BJ (cell line): ENCODE measurements at regions of chr2 and their contacts with region 1.

Region 1: DNA sequence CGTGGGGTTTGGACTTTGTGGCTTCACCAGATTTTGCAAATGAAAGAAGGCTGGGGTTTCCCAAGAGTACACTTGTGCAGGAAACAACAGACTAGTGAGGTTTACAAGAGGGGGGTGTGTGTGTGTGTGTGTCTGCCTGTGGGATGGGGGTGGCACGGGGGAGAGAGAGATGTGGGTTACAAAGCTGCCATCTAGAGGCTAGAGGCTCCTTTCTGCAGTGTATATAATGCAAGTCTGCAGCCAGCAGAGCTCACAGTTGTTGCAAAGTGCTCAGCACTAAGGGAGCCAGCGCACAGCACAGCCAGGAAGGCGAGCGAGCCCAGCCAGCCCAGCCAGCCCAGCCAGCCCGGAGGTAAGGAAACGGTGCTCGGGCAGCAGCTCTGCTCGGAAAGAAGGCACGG is at the start of gene ACKR3:
- DNase-seq: peak; percentile 68
- H3K4me3 ChIP-seq: peak within 1 kb of the TSS; percentile 37
- H3K27me3 ChIP-seq: peaks cover 22% of the 10 kb centered on the region
- CTCF ChIP-seq: peak; percentile 56
- polyA plus RNA-seq, gene ACKR3: 4.6 and 6.6 TPM in 2 replicates

Region 2: DNA sequence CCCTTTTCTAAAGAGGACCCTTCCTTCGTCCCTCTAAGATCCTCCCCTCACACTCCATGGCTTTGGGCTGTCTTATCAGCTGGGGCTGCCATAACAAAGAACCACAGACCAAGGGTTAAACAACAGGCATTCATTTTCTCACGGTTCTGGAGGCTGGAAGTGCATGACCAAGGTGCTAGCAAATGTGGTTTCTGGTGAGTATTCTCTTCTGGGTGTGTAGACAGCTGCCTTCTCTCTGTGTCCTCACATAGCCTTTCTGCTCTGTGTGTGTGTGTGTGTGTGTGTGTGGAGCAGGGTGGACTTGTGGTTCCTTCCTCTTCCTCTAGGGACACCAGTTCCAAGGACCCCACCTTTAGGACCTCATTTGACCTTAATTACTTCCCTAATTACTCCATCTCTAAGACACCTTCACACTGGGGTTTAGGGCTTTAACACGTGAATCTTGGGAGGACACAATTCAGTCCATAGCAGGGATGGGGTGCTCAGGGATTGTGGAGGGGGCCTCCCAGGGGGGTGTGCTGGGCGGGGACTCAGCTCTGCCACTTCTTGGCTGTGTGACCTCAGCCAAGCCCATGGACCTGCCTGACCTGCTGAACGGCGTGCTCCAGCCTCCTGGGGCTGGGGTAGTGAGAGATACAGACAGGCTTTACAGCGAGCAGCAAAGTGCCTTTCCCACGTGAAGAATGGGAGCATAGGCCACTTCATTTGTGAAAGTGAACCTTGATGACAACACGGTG is 38.0 kb after region 1 on chr2:
- CTCF ChIA-PET with region 1: interaction called, 7 read pairs
- POLR2A ChIA-PET with region 1: interaction called, 20 read pairs
- DNase-seq: peak; percentile 51
- H3K4me3 ChIP-seq: no peak overlapping the region
- H3K27me3 ChIP-seq: peaks cover 3% of the 10 kb centered on the region
- CTCF ChIP-seq: peak; percentile 17; the same call in 1 of the 2 replicates

Region 3: DNA sequence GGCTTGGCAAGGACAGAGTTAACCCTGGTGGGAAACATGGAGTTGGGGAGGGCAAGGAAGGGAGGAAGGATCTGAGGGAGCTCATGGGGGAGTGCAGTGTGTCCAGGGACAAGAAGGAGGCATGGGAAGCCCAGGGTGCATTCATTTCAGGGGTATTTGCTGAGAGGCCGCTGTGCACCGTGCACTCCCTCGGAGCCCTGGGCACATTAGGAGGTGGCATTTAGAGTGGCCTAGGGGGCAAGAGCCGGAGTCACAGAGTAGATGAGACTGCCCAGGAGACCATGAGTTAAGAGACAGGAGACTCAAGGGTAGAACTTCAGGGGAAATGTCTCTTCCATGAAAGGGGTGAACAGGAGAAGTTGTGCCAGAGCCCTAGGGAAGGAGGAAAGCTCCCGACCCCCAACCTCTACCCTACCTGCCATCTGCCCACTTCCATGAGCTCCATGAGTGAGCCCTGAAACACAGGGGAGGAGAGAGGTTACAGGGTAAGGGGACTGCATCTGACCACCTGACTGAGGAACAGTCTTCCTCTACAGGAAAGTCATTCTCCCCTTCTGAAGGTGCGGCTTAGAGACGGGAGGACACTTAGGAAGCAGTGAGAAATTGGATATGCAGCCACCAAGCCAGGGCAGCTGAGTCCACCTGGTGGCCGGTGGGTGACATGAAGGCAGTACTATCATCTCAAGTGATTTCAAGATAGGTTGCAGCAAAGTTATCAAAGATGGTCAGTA is 457.6 kb after region 1 on chr2:
- CTCF ChIA-PET with region 1: interaction called, 10 read pairs
- POLR2A ChIA-PET with region 1: no interaction called
- DNase-seq: no peak
- H3K4me3 ChIP-seq: no peak overlapping the region
- H3K27me3 ChIP-seq: no peaks in the 10 kb centered on the region; the same call in 1 of the 2 replicates
- CTCF ChIP-seq: peak; percentile 90